GM10248 (cell line): ENCODE measurements at regions of chr2 and their contacts with region 1.

Region 1: GRCh38 chr2:113907297-113907696 is 17.4 kb downstream of the ACTR3 start:
- DNase-seq: no peak
- CTCF ChIP-seq: no peak

Region 2: DNA sequence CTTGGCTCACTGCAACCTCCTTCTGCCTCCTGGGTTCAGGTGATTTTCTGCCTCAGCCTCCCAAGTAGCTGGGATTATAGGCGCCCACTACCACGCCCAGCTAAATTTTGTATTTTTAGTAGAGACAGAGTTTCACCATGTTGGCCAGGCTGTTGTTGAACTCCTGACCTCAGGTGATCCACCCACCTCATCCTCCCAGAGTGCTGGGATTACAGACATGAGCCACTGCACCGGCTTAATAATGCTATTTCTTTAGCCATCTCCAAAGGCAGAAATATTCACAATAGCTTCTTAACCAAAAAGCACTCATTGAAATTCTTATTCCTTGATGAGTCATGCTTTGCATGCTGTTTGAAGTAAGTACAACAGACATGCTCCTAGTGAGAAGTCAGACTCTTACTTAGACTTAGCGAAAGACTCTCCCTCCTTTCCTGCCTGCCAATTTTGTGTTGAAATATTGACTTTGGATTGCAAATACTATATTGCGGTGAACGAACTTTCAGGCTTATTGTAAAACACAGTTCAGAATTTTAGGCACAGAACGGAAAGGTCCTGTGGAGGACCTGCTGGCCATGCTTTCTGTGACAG is 13.0 kb before region 1 on chr2:
- CTCF ChIA-PET with region 1: interaction called, 12 read pairs
- POLR2A ChIA-PET with region 1: interaction called, 3 read pairs
- DNase-seq: no peak
- CTCF ChIP-seq: no peak

Region 3: DNA sequence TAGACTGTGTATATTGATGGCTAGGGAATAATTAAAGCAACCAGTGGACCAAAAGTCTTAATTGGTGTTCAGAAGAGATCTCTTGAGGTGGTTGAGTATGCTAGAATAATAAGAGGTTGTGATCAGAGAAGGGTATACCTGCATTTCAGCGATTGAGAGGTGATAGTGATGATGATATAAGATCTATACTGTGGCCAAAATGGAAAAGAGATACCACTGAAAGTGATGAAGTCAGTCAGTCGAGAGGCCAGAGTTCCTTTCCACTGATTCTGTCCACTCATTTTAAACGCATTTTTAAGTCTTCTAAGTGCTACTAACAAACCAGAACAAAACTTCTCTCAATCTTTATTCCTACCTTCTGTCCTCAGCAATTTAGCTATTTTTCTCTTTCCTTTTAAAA is 15.5 kb after region 1 on chr2:
- CTCF ChIA-PET with region 1: interaction called, 5 read pairs
- POLR2A ChIA-PET with region 1: interaction called, 10 read pairs
- DNase-seq: no peak
- CTCF ChIP-seq: no peak